Ovary (tissue), 10 donors: ENCODE measurements at regions of chr14 and their contacts with region 1.

Region 1: DNA sequence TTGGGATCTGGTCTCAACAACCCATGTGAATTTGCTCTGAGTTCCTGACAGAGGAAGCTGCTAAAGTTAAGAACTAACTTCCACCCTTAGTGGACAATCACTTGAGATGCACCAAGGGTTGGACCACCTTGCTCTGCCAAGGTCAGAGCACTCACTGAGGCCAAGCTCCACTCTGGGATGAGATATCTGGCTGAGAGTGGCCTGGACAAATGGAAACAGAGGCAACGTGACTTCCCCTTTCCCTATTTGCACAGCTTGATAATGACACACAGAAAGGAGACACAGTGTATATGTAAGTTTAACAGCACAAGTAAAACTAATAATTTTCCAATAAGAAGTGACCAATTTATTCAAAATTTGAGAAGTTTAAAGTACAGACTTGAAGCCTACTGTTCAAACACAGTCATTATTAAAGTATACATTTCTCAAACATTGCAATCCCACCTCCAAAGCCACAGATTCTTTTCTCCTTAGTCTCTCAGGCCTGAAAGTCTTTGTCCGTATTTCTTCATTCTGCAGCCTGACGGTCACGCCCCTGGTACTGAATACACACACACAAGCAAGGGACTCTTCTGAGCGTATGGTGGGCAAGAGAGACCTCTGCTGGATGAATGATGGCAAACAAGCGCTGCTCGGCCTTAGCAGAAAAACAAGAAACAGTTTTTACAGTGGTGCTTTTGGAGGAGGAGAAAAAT is 28.6 kb downstream of the TMEM30B start:
- DNase-seq: peak; percentile 54 to 77 (median 65)
- H3K4me3 ChIP-seq: no peak overlapping the region
- H3K27ac ChIP-seq: no peak overlapping the region
- H3K4me1 ChIP-seq: peaks cover 2% of the 10 kb centered on the region
- H3K27me3 ChIP-seq: no peaks in the 10 kb centered on the region
- CTCF ChIP-seq: peak; percentile 35 to 76 (median 75)
- EP300 ChIP-seq: no peak
- POLR2A ChIP-seq: no peak

Region 2: DNA sequence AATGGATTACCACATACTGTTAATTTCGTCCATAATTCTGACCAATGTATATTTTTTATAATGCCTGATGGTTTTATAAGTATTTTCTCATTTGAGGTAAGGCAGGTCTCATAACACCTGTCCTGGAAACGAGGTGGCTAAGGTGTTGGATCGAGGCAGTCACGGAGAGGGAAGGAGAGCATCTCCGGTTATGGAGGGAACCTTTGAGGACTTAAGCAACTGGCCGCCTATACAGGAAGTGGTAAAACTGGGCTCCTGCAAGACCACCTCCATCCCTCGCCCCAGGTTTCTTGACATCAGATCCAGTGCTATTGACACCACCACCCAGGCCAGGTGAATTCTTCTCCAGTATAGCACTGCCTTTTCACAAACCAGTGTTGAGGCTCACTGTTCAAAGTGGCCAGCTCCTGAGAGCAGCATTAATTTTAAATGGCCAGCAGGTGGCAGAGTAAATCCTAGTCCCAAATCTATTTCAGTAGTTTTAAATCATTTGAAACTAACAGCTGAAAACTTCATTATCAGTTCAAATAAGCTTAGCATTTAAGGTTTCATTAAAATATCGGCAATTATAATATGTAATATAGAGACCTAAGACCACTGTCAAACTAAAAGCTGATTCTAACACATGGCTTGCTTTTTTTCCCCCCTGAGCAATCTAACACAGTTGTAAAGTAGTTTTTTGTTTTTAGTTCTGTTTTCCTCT is 902.7 kb before region 1 on chr14:
- intact Hi-C with region 1: loop called in 1 of 4 experiments (anchors 10 kb)
- DNase-seq: peak in 3 of 5 donors; percentile 8 to 22 (median 11)
- H3K4me3 ChIP-seq: no peak overlapping the region
- H3K27ac ChIP-seq: no peak overlapping the region
- H3K4me1 ChIP-seq: no peaks in the 10 kb centered on the region
- H3K27me3 ChIP-seq: no peaks in the 10 kb centered on the region
- CTCF ChIP-seq: peak; percentile 28 to 50 (median 29)
- EP300 ChIP-seq: no peak
- POLR2A ChIP-seq: no peak

Region 3: GRCh38 chr14:60622917-60623257 is 629.6 kb before region 1 on chr14:
- intact Hi-C with region 1: loop called (anchors 5 to 10 kb)
- DNase-seq: no peak
- H3K4me3 ChIP-seq: no peak overlapping the region
- H3K27ac ChIP-seq: no peak overlapping the region
- H3K4me1 ChIP-seq: no peaks in the 10 kb centered on the region
- H3K27me3 ChIP-seq: no peaks in the 10 kb centered on the region
- CTCF ChIP-seq: no peak
- EP300 ChIP-seq: no peak
- POLR2A ChIP-seq: no peak

Region 4: DNA sequence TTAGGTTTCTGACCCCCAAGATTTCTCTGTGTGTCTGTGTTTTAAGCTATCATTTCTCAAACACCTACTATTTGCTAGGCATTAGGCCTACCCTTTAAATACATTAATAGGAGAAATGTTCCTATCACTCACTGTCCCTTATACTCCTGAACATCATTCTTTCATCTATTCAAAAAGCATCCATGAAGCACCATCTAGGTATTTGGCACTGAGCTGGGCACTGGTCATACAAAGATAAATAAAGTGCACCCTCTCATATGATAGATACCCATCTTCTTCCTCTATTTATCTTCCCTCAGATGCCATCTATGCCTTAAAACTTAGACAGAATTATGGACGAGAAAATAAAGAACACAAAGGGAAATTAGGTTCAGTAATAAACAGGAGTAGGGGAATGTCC is 623.6 kb before region 1 on chr14:
- intact Hi-C with region 1: loop called (anchors 5 to 10 kb)
- DNase-seq: no peak
- H3K4me3 ChIP-seq: no peak overlapping the region
- H3K27ac ChIP-seq: no peak overlapping the region
- H3K4me1 ChIP-seq: no peaks in the 10 kb centered on the region
- H3K27me3 ChIP-seq: no peaks in the 10 kb centered on the region
- CTCF ChIP-seq: no peak
- EP300 ChIP-seq: no peak
- POLR2A ChIP-seq: no peak

Region 5: GRCh38 chr14:60656686-60657455 is 595.6 kb before region 1 on chr14:
- intact Hi-C with region 1: loop called in 1 of 4 experiments (anchors 10 kb)
- DNase-seq: peak in 4 of 5 donors; percentile 49 to 70 (median 60)
- H3K4me3 ChIP-seq: peak overlapping the region; percentile 46
- H3K27ac ChIP-seq: no peak overlapping the region
- H3K4me1 ChIP-seq: peaks cover 4% of the 10 kb centered on the region
- H3K27me3 ChIP-seq: peaks cover 3% of the 10 kb centered on the region
- CTCF ChIP-seq: no peak
- EP300 ChIP-seq: no peak
- POLR2A ChIP-seq: no peak

Region 6: GRCh38 chr14:60724137-60724619 is 528.3 kb before region 1 on chr14 and contains the start of gene SIX4:
- intact Hi-C with region 1: loop called in 1 of 4 experiments (anchors 10 kb)
- DNase-seq: peak; percentile 66 to 76 (median 70)
- H3K4me3 ChIP-seq: peak within 1 kb of the TSS; percentile 80
- H3K27ac ChIP-seq: peak within 1 kb of the TSS; percentile 88 to 92
- H3K4me1 ChIP-seq: no peaks in the 10 kb centered on the region
- H3K27me3 ChIP-seq: no peaks in the 10 kb centered on the region
- CTCF ChIP-seq: no peak
- EP300 ChIP-seq: no peak
- POLR2A ChIP-seq: peak; percentile 51
- total RNA-seq, gene SIX4: 3.5 to 11.1 (median 7.7) TPM

Region 7: GRCh38 chr14:61025251-61026223 is 227.0 kb before region 1 on chr14:
- intact Hi-C with region 1: loop called in 2 of 4 experiments (anchors 10 kb)
- DNase-seq: peak; percentile 33 to 65 (median 44)
- H3K4me3 ChIP-seq: no peak overlapping the region
- H3K27ac ChIP-seq: no peak overlapping the region
- H3K4me1 ChIP-seq: no peaks in the 10 kb centered on the region
- H3K27me3 ChIP-seq: no peaks in the 10 kb centered on the region
- CTCF ChIP-seq: peak; percentile 59 to 70 (median 64)
- EP300 ChIP-seq: no peak
- POLR2A ChIP-seq: no peak